Common myeloid progenitor, CD34-positive (primary cell): ENCODE measurements at regions of chr10 and their contacts with region 1.

Region 1: GRCh38 chr10:75401569-75402485 is at the start of gene ZNF503:
- DNase-seq: peak; percentile 93 to 97 (median 93)
- H3K4me3 ChIP-seq: peak within 1 kb of the TSS; percentile 59 to 91 (median 86)
- H3K27ac ChIP-seq: peak within 1 kb of the TSS in 1 of 2 experiments; percentile 61
- H3K4me1 ChIP-seq: peaks cover 0 to 56% (median 51%) of the 10 kb centered on the region in 4 experiments
- H3K27me3 ChIP-seq: peaks cover 0 to 57% (median 19%) of the 10 kb centered on the region in 5 experiments

Region 2: DNA sequence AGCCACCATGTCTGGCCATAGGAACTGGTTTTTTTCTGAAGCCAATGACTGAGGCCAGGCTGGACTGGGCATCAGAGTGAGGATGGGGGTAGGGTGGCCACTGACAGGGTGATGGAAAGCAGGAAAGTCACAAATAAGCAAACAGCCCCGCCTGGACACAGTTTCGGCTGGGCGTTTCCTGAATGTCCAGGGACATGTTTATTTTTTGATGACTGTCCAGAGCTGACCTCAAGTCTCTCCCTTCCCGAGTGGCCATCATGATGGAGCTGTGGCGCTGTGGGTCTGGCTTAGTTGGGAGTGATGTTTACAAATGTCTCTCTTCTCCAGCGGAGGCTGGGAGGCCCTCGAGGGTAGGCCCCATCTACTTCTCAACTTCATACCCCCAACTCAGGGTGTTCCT is 128.9 kb before region 1 on chr10:
- CTCF ChIA-PET with region 1: no interaction called
- POLR2A ChIA-PET with region 1: no interaction called
- DNase-seq: no peak
- H3K4me3 ChIP-seq: no peak overlapping the region
- H3K27ac ChIP-seq: no peak overlapping the region
- H3K4me1 ChIP-seq: peaks cover 0 to 13% (median 4%) of the 10 kb centered on the region in 4 experiments
- H3K27me3 ChIP-seq: no peaks in the 10 kb centered on the region

Region 3: GRCh38 chr10:75431180-75432111 is 29.6 kb after region 1 on chr10 and contains the start of gene LRMDA:
- CTCF ChIA-PET with region 1: interaction called, 6 read pairs
- POLR2A ChIA-PET with region 1: interaction called, 14 read pairs
- DNase-seq: peak; percentile 67 to 91 (median 91)
- H3K4me3 ChIP-seq: peak within 1 kb of the TSS; percentile 62 to 89 (median 78)
- H3K27ac ChIP-seq: peak within 1 kb of the TSS; percentile 37 to 80
- H3K4me1 ChIP-seq: peaks cover 9 to 56% (median 42%) of the 10 kb centered on the region in 4 experiments
- H3K27me3 ChIP-seq: no peaks in the 10 kb centered on the region

Region 4: DNA sequence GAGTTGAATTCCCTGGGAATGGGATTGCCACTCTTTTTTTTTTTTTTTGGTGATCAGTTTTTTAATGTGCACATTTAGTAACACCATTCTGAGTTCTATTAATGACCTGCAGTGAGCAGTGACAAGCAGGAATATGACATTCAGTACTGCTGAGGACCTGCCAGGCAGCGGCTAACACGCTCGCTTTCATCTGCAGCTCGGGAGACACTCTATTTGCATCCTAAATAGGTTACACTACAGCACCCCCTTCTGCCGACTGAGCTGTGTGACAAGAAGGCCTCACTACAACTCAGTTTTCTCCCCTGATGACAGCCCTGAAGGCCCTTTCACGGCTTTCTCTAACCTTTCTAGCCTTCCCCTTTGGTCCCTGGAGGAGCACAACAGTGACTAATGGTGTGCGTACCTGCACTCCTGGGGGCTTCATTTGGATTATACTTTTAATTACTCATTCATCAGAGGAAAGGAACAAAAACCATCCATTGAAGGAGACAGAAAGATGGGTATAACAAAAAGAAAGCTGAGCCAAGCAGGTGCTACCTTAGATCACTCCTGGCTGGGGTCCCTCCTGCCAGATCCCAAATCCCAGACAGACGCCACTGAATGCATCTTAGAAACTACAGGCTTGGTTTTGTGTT is 902.0 kb after region 1 on chr10:
- CTCF ChIA-PET with region 1: interaction called, 18 read pairs
- POLR2A ChIA-PET with region 1: no interaction called
- DNase-seq: peak; percentile 80 to 90 (median 90)
- H3K4me3 ChIP-seq: no peak overlapping the region
- H3K27ac ChIP-seq: no peak overlapping the region
- H3K4me1 ChIP-seq: peaks cover 0 to 19% (median 7%) of the 10 kb centered on the region in 4 experiments
- H3K27me3 ChIP-seq: no peaks in the 10 kb centered on the region